AG04449 (cell line): ENCODE measurements at regions of chr6 and their contacts with region 1.

Region 1: GRCh38 chr6:13624871-13625288 is 9.7 kb downstream of the NOL7 start:
- DNase-seq: no peak
- H3K4me3 ChIP-seq: no peak overlapping the region
- CTCF ChIP-seq: peak; percentile 46

Region 2: GRCh38 chr6:13635948-13636658 is 11.2 kb after region 1 on chr6:
- CTCF ChIA-PET with region 1: interaction called, 26 read pairs
- POLR2A ChIA-PET with region 1: no interaction called
- DNase-seq: no peak
- H3K4me3 ChIP-seq: no peak overlapping the region
- CTCF ChIP-seq: no peak